Endothelial cell of umbilical vein (primary cell): ENCODE measurements at regions of chr2 and their contacts with region 1.

Region 1: GRCh38 chr2:176554101-176555048 is 285.1 kb downstream of the MTX2 start:
- DNase-seq: peak; percentile 89
- H3K4me3 ChIP-seq: peak overlapping the region; percentile 11 to 48 (median 44)
- H3K27ac ChIP-seq: peak overlapping the region; percentile 77
- H3K4me1 ChIP-seq: peaks cover 13% of the 10 kb centered on the region
- H3K27me3 ChIP-seq: no peaks in the 10 kb centered on the region
- CTCF ChIP-seq: peak; percentile 47 to 65
- POLR2A ChIP-seq: no peak

Region 2: DNA sequence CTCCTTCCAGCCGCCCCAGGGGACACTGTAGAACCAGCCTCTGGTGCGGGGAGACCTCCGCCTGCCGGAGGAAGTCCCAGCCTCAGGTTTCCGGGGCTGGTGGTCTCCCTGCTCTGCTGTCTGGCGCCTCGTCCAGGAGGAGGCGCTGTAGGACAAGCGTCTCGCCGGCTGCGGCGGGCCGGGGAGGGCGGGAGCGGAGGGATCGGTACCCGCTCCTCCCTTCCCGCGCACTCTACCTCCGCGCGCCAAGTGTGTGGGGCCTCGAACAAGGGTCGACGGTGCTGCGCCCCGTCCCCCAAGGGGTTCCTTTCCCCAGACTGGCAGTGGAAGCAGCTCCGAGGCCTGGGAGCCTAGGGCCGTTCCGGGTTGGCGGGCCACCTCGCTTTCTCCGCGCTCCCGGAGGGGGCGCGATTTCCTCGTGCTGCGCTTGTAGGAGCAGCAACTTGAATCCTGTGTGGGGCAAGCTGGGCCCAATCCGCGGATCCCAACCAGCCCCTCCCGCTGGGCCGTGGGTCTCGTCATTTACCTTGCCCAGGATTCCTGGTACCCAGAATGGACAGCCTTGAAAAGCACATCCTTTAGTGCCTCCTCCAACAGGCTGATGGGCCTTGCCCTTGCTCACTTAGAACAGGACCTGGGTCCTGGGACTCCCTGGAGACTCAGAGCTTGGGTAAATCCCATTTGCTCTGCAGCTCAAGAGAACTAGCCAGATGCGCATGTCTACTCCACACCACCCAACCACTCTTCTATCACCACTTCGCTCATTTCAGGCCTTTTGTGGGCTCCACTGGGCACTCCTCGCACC is 413.7 kb before region 1 on chr2:
- CTCF ChIA-PET with region 1: interaction called, 227 read pairs
- POLR2A ChIA-PET with region 1: interaction called, 13 read pairs
- dilution Hi-C with region 1: no loop called
- intact Hi-C with region 1: loop called (anchors 1 kb)
- DNase-seq: peak; percentile 82
- H3K4me3 ChIP-seq: peak overlapping the region; percentile 16 to 51 (median 39)
- H3K27ac ChIP-seq: peak overlapping the region; percentile 56
- H3K4me1 ChIP-seq: peaks cover 30% of the 10 kb centered on the region
- H3K27me3 ChIP-seq: no peaks in the 10 kb centered on the region
- CTCF ChIP-seq: peak; percentile 80 to 83
- POLR2A ChIP-seq: peak; percentile 58

Region 3: GRCh38 chr2:176178038-176178756 is 376.2 kb before region 1 on chr2:
- CTCF ChIA-PET with region 1: interaction called, 14 read pairs
- POLR2A ChIA-PET with region 1: no interaction called
- dilution Hi-C with region 1: no loop called
- intact Hi-C with region 1: loop called (anchors 1 kb)
- DNase-seq: peak; percentile 68
- H3K4me3 ChIP-seq: peak overlapping the region; percentile 33 to 49 (median 48)
- H3K27ac ChIP-seq: peak overlapping the region; percentile 77
- H3K4me1 ChIP-seq: peaks cover 30% of the 10 kb centered on the region
- H3K27me3 ChIP-seq: no peaks in the 10 kb centered on the region
- CTCF ChIP-seq: no peak
- POLR2A ChIP-seq: no peak

Region 4: DNA sequence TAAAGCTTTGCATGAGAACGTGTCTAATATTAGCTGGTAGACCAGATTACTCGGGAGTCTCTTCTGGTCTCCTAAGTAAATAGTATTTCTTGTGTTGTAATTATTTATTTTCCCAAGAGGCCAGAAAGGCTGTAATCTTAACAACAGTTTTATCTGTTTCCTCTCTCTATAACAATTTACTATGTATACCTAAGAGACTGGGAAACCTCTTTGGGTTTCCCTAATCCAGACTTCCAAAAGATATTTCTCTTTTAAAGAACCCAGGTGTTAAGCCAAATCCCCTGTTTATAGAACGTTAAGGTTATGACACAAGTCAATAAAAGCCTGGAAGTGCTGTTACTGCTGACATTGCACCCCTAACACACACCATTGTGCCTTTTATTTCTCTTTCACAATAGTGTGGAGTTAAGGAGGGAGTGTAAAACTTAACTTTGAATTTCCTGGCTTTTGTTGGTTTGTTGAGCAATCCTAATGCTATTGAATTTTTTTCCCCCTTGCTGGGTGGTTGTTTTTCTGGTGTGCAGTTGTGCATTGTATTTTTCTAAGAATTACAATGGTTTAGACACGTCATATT is 92.5 kb before region 1 on chr2:
- CTCF ChIA-PET with region 1: interaction called, 243 read pairs
- POLR2A ChIA-PET with region 1: no interaction called
- dilution Hi-C with region 1: no loop called
- intact Hi-C with region 1: no loop called
- DNase-seq: peak; percentile 79
- H3K4me3 ChIP-seq: no peak overlapping the region
- H3K27ac ChIP-seq: peak overlapping the region; percentile 16
- H3K4me1 ChIP-seq: peaks cover 19% of the 10 kb centered on the region
- H3K27me3 ChIP-seq: no peaks in the 10 kb centered on the region
- CTCF ChIP-seq: no peak
- POLR2A ChIP-seq: no peak

Region 5: DNA sequence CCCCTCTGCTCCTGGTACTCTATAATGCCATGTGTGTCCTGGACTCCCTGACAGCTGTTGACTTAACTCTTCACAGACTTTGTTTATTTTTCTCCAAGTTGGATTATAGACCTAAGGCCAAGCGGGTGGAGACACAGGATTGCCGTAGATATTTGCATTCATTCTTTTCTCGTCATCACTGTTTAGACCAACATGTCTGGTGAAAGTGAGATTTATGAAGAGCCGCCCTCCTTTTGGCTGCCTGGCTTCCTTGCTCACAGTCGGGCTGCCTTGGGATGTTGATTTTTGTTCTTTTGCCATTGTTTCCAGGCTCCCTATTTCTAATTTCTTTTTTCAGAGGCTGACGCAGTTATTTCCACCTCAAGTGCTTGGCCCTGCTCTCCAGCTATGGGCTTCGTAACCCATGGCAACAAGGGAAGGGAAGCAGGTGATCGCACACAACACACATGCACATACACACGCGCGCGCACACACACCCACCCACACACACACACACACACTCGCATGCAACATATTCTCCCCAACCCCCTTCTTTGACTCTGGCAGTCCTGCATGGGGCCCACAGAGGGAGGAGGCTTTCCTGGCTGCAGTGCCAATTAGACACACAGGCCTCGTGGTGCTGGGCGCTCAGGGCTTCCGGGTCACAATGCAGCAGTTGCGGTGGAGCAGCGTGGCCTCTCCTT is 11.4 kb after region 1 on chr2:
- CTCF ChIA-PET with region 1: interaction called, 43 read pairs
- POLR2A ChIA-PET with region 1: interaction called, 3 read pairs
- dilution Hi-C with region 1: no loop called
- intact Hi-C with region 1: no loop called
- DNase-seq: peak; percentile 98
- H3K4me3 ChIP-seq: peak overlapping the region in 1 of 3 experiments; percentile 2
- H3K27ac ChIP-seq: peak overlapping the region; percentile 67
- H3K4me1 ChIP-seq: peaks cover 15% of the 10 kb centered on the region
- H3K27me3 ChIP-seq: no peaks in the 10 kb centered on the region
- CTCF ChIP-seq: no peak
- POLR2A ChIP-seq: no peak

Region 6: GRCh38 chr2:176638167-176639015 is 84.0 kb after region 1 on chr2:
- CTCF ChIA-PET with region 1: interaction called, 122 read pairs
- POLR2A ChIA-PET with region 1: interaction called, 3 read pairs
- dilution Hi-C with region 1: no loop called
- intact Hi-C with region 1: loop called (anchors 1 kb)
- DNase-seq: peak; percentile 74
- H3K4me3 ChIP-seq: peak overlapping the region; percentile 9 to 59 (median 55)
- H3K27ac ChIP-seq: peak overlapping the region; percentile 79
- H3K4me1 ChIP-seq: peaks cover 25% of the 10 kb centered on the region
- H3K27me3 ChIP-seq: no peaks in the 10 kb centered on the region
- CTCF ChIP-seq: peak; percentile 63 to 83
- POLR2A ChIP-seq: no peak

Region 7: DNA sequence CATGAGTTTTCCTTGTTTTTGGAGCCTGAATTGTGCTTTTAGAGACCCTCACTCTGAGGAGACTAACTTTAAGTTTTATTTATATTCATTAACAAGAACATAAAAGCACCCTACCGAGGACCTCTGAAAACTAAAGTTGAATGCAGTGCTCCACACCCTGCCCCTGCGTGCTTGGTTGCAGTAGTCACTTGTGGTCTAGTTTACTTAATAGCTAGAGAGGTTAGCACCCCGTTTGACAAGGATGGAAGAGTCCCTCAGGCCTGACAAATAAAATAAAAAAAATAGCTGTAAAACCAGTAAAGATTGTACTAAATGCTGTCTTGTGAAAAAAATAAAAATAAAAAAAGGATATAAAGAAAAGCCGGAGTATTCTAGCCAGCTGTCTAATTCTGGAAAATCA is 110.1 kb after region 1 on chr2:
- CTCF ChIA-PET with region 1: no interaction called
- POLR2A ChIA-PET with region 1: no interaction called
- dilution Hi-C with region 1: no loop called
- intact Hi-C with region 1: no loop called
- DNase-seq: no peak
- H3K4me3 ChIP-seq: no peak overlapping the region
- H3K27ac ChIP-seq: no peak overlapping the region
- H3K4me1 ChIP-seq: no peaks in the 10 kb centered on the region
- H3K27me3 ChIP-seq: peaks cover 0 to 5% of the 10 kb centered on the region in 2 experiments
- CTCF ChIP-seq: no peak
- POLR2A ChIP-seq: no peak